Naive thymus-derived CD4-positive, alpha-beta T cell (primary cell): ENCODE measurements at regions of chr5 and their contacts with region 1.

Region 1: GRCh38 chr5:142108432-142109330 is at the start of gene NDFIP1:
- DNase-seq: peak; percentile 80 to 93 (median 91)
- ATAC-seq: peak; percentile 89
- H3K4me3 ChIP-seq: peak within 1 kb of the TSS; percentile 75
- H3K4me3 Mint-ChIP-seq: peak within 1 kb of the TSS; percentile 94 to 100 (median 98)
- H3K27ac ChIP-seq: peak within 1 kb of the TSS; percentile 99
- H3K27ac Mint-ChIP-seq: peak within 1 kb of the TSS; percentile 92 to 100 (median 98)
- H3K4me1 ChIP-seq: peaks cover 28 to 64% of the 10 kb centered on the region in 2 donors
- H3K4me1 Mint-ChIP-seq: peaks cover 38 to 78% (median 71%) of the 10 kb centered on the region in 7 donors
- H3K27me3 ChIP-seq: no peaks in the 10 kb centered on the region
- H3K27me3 Mint-ChIP-seq: no peaks in the 10 kb centered on the region
- total RNA-seq, gene NDFIP1: 53.0 to 136 (median 95.5) TPM

Region 2: GRCh38 chr5:141923448-141924352 is 185.0 kb before region 1 on chr5 and contains the start of gene DELE1:
- CTCF ChIA-PET with region 1: no interaction called
- POLR2A ChIA-PET with region 1: no interaction called
- intact Hi-C with region 1: loop called (anchors 5 kb)
- DNase-seq: peak; percentile 79 to 92 (median 90)
- ATAC-seq: peak; percentile 97
- H3K4me3 ChIP-seq: peak within 1 kb of the TSS; percentile 81
- H3K4me3 Mint-ChIP-seq: peak within 1 kb of the TSS; percentile 88 to 98 (median 94)
- H3K27ac ChIP-seq: peak within 1 kb of the TSS; percentile 98
- H3K27ac Mint-ChIP-seq: peak within 1 kb of the TSS; percentile 87 to 99 (median 98)
- H3K4me1 ChIP-seq: peaks cover 10 to 14% of the 10 kb centered on the region in 2 donors
- H3K4me1 Mint-ChIP-seq: peaks cover 23 to 54% (median 36%) of the 10 kb centered on the region in 7 donors
- H3K27me3 ChIP-seq: no peaks in the 10 kb centered on the region
- H3K27me3 Mint-ChIP-seq: no peaks in the 10 kb centered on the region
- total RNA-seq, gene DELE1: 77.3 to 101 (median 88.2) TPM

Region 3: GRCh38 chr5:142012792-142013388 is 95.8 kb before region 1 on chr5 and contains the start of gene GNPDA1:
- CTCF ChIA-PET with region 1: interaction called, 22 read pairs
- POLR2A ChIA-PET with region 1: interaction called, 80 read pairs
- intact Hi-C with region 1: loop called (anchors 1 kb)
- DNase-seq: peak; percentile 38 to 81 (median 54)
- ATAC-seq: peak; percentile 87
- H3K4me3 ChIP-seq: peak within 1 kb of the TSS; percentile 68
- H3K4me3 Mint-ChIP-seq: peak within 1 kb of the TSS; percentile 76 to 93 (median 88)
- H3K27ac ChIP-seq: peak within 1 kb of the TSS; percentile 76
- H3K27ac Mint-ChIP-seq: peak within 1 kb of the TSS; percentile 87 to 93 (median 90)
- H3K4me1 ChIP-seq: peaks cover 40 to 53% of the 10 kb centered on the region in 2 donors
- H3K4me1 Mint-ChIP-seq: peaks cover 34 to 86% (median 80%) of the 10 kb centered on the region in 7 donors
- H3K27me3 ChIP-seq: no peaks in the 10 kb centered on the region
- H3K27me3 Mint-ChIP-seq: no peaks in the 10 kb centered on the region
- total RNA-seq, gene GNPDA1: 13.3 to 60.4 (median 26.4) TPM

Region 4: DNA sequence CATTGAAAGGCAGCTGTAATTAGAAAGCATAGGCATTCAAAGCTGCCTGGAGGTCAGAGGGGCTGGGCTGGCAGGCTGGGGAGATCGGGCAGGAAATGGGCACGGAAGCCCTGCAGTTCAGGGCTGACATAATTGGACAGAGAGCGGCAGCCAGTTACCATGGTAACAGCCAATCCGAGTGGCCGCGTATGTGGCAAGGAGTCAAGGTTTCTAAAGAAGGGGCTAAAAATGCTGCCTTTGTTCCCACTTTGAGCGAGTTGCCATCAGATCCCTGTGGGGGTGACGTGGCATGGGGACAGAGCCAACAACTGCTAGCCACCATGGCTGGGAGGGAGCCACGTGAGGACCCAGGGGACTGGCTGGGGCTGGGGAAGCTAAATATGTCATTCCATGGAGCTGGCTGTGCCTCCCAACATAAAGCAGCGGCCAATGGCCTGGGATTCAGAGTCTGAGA is 44.8 kb before region 1 on chr5:
- CTCF ChIA-PET with region 1: interaction called, 4 read pairs
- POLR2A ChIA-PET with region 1: interaction called, 9 read pairs
- intact Hi-C with region 1: loop called in 1 of 2 experiments (anchors 2 kb)
- DNase-seq: peak in 7 of 9 donors; percentile 13 to 52 (median 46)
- ATAC-seq: peak; percentile 67
- H3K4me3 ChIP-seq: peak overlapping the region; percentile 27
- H3K4me3 Mint-ChIP-seq: peak overlapping the region; percentile 14 to 81 (median 52)
- H3K27ac ChIP-seq: no peak overlapping the region
- H3K27ac Mint-ChIP-seq: peak overlapping the region in 5 of 9 donors; percentile 25 to 55 (median 46)
- H3K4me1 ChIP-seq: peaks cover 5 to 16% of the 10 kb centered on the region in 2 donors
- H3K4me1 Mint-ChIP-seq: peaks cover 8 to 25% (median 18%) of the 10 kb centered on the region in 7 donors
- H3K27me3 ChIP-seq: no peaks in the 10 kb centered on the region
- H3K27me3 Mint-ChIP-seq: peaks cover 0 to 2% (median 0%) of the 10 kb centered on the region in 5 donors

Region 5: DNA sequence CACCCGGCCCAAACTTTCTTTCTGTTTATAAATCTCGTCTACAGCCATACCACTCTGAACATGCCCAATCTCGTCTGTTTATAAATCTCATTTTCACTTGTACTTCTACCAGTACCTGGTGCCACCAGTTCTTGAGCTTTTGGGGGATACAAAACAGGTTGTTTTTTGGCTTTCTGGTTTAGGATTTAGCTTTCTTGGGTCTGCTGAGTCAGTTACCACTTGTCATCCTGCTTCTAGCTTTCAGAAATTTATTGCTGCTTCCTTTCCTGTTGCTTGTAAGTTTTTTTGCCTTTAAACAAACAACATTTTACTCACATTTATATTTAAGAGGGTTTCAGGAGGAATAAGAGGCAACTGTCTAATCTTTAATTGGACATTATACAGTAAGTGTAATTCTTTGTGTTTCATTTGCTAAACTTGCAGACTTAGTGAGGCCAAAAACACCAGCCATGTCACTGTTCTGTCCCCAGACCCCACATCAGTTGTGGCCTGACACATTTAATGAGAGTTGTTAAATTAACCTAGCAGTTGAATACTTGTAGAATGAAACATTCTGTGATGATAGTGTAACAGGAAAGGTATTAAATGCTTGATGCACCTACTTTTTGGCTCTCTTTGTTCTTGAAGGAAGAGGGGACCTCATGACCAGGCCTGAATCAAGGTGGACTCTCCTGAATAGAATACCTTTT is 11.7 kb after region 1 on chr5:
- CTCF ChIA-PET with region 1: no interaction called
- POLR2A ChIA-PET with region 1: interaction called, 24 read pairs
- intact Hi-C with region 1: loop called (anchors 1 kb)
- DNase-seq: no peak
- ATAC-seq: no peak
- H3K4me3 ChIP-seq: no peak overlapping the region
- H3K4me3 Mint-ChIP-seq: peak overlapping the region; percentile 34 to 83 (median 72)
- H3K27ac ChIP-seq: peak overlapping the region; percentile 10
- H3K27ac Mint-ChIP-seq: peak overlapping the region; percentile 32 to 88 (median 75)
- H3K4me1 ChIP-seq: peaks cover 29 to 59% of the 10 kb centered on the region in 2 donors
- H3K4me1 Mint-ChIP-seq: peaks cover 58 to 94% (median 74%) of the 10 kb centered on the region in 7 donors
- H3K27me3 ChIP-seq: no peaks in the 10 kb centered on the region
- H3K27me3 Mint-ChIP-seq: no peaks in the 10 kb centered on the region

Region 6: GRCh38 chr5:142221091-142221860 is 112.6 kb after region 1 on chr5:
- CTCF ChIA-PET with region 1: no interaction called
- POLR2A ChIA-PET with region 1: no interaction called
- intact Hi-C with region 1: loop called in 1 of 2 experiments (anchors 2 kb)
- DNase-seq: no peak
- ATAC-seq: no peak
- H3K4me3 ChIP-seq: no peak overlapping the region
- H3K4me3 Mint-ChIP-seq: peak overlapping the region in 3 of 10 donors; percentile 17 to 31 (median 19)
- H3K27ac ChIP-seq: no peak overlapping the region
- H3K27ac Mint-ChIP-seq: peak overlapping the region in 3 of 9 donors; percentile 3 to 52 (median 6)
- H3K4me1 ChIP-seq: peaks cover 6 to 25% of the 10 kb centered on the region in 2 donors
- H3K4me1 Mint-ChIP-seq: peaks cover 18 to 39% (median 34%) of the 10 kb centered on the region in 7 donors
- H3K27me3 ChIP-seq: no peaks in the 10 kb centered on the region
- H3K27me3 Mint-ChIP-seq: peaks cover 0 to 10% (median 0%) of the 10 kb centered on the region in 5 donors